Naive thymus-derived CD4-positive, alpha-beta T cell (primary cell): ENCODE measurements at regions of chr7 and their contacts with region 1.

Region 1: DNA sequence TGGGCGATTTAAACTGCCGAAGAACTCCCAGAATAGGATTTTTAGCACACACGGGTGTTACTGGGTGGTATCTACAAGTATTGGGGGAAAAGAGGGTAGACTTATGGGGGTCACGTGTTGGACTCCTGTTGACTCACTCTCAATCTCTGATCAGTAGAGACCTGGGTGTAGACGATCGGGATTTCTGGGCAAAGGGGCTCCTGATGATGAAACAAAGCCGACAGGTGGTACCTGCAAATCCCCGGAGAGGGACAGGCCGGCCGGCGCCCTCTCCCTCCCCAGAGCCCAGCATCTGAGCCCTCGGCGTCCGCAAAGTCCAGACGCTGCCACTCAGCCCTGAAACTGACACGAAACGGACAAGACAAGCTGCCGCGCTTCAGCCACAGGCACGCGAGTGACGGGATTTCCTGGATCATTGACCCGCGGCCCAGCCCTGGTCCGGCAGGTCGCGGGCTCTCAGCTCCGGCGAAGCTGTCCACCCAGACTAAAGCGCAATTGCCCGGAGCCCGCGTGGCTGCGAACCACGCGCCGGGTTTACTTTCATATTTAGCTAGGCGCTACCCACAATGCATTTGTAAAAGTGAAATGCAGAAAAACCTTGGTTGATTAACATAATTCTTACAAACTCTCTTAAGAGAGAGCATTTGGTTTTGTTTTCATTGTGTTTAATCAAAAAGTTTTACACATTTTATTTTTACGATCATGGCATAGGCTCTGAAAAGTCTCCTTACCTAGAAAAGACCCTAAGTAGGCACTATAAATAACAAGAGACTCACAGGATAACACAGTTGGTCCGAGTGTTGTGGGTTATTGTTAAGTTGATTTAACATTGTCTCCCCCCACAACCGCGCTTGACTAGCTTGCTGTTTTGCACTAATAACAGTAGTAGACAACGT is 56.9 kb upstream of the EZH2 start:
- DNase-seq: peak; percentile 45 to 86 (median 76)
- ATAC-seq: peak; percentile 88
- H3K4me3 ChIP-seq: peak overlapping the region; percentile 95
- H3K4me3 Mint-ChIP-seq: peak overlapping the region; percentile 86 to 99 (median 96)
- H3K27ac ChIP-seq: peak overlapping the region; percentile 88
- H3K27ac Mint-ChIP-seq: peak overlapping the region; percentile 94 to 99 (median 98)
- H3K4me1 ChIP-seq: peaks cover 7 to 12% of the 10 kb centered on the region in 2 donors
- H3K4me1 Mint-ChIP-seq: peaks cover 8 to 25% (median 20%) of the 10 kb centered on the region in 7 donors
- H3K27me3 ChIP-seq: no peaks in the 10 kb centered on the region
- H3K27me3 Mint-ChIP-seq: no peaks in the 10 kb centered on the region

Region 2: DNA sequence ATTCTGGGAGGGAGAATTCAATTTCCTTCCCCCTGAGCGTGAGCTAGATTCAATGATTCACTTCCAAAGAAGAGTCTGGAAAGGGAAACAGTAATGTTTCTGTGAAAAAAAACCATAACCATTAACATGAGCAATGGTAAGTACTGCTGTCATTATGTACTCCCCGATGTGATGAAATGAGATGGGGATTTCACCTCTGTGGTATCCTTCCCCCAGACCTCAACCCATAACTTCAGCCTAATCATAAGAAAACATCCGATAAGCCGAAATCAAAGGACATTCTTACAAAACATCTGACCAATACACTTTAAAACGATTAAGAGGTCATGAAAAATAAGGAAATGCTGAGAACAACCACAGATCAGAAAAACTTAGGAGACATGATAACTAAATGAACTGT is 84.1 kb before region 1 on chr7:
- CTCF ChIA-PET with region 1: interaction called, 13 read pairs
- POLR2A ChIA-PET with region 1: interaction called, 4 read pairs
- intact Hi-C with region 1: loop called (anchors 1 kb)
- DNase-seq: no peak
- ATAC-seq: peak; percentile 57
- H3K4me3 ChIP-seq: no peak overlapping the region
- H3K4me3 Mint-ChIP-seq: peak overlapping the region in 1 of 10 donors; percentile 60
- H3K27ac ChIP-seq: no peak overlapping the region
- H3K27ac Mint-ChIP-seq: peak overlapping the region in 1 of 9 donors; percentile 63
- H3K4me1 ChIP-seq: peaks cover 3 to 5% of the 10 kb centered on the region in 2 donors
- H3K4me1 Mint-ChIP-seq: peaks cover 8 to 45% (median 15%) of the 10 kb centered on the region in 7 donors
- H3K27me3 ChIP-seq: no peaks in the 10 kb centered on the region
- H3K27me3 Mint-ChIP-seq: no peaks in the 10 kb centered on the region

Region 3: DNA sequence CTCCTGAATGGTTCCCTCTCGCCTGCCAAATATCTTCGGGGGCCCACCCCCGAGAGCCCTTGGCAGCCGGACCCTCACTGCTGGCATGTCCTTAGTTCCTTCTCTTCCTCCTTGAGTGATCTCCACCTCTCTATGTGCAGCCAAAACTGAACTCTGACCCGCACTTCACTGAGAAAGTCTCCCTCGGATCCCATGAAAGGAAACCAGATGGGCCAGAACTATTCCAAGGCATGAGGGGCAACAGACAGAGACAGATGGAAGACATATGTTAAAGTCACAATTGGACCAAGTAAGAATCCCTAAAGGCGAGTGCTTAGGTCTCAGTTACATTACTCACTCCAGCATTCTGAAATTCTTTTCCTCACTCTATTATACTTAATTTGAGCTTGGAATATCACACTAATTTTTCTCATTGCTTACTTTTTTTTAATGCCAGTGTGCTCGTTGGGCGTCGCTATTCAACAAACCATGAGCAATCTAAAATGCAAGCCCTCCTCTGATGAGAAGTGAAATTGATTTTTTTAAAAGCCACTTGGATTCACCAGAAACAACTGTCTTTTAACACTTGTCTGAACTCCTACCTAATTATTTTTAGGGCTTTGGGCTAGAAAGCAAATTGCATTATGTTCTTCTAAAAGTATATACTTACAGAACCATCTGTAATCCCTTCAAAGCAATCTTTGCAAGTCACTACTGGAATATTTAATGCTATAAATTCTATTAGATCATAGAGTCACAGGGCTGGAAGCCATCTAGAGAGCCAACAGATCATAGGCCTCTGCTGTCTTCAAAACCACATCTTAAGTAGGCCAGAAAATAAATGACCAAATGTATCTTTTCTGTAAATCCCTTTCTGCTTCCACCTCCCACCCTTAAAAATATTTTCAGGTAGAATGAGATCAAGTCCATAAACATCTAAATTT is 13.6 kb before region 1 on chr7:
- CTCF ChIA-PET with region 1: interaction called, 3 read pairs
- POLR2A ChIA-PET with region 1: interaction called, 10 read pairs
- intact Hi-C with region 1: loop called in 1 of 2 experiments (anchors 2 kb)
- DNase-seq: no peak
- ATAC-seq: no peak
- H3K4me3 ChIP-seq: no peak overlapping the region
- H3K4me3 Mint-ChIP-seq: peak overlapping the region in 1 of 10 donors; percentile 8
- H3K27ac ChIP-seq: no peak overlapping the region
- H3K27ac Mint-ChIP-seq: peak overlapping the region in 1 of 9 donors; percentile 19
- H3K4me1 ChIP-seq: no peaks in the 10 kb centered on the region
- H3K4me1 Mint-ChIP-seq: peaks cover 3 to 42% (median 28%) of the 10 kb centered on the region in 7 donors
- H3K27me3 ChIP-seq: no peaks in the 10 kb centered on the region
- H3K27me3 Mint-ChIP-seq: no peaks in the 10 kb centered on the region